Calu3 (cell line): ENCODE measurements at regions of chr6 and their contacts with region 1.

Region 1: GRCh38 chr6:52087498-52087999 is at the start of gene PKHD1:
- DNase-seq: peak; percentile 73
- H3K4me3 Mint-ChIP-seq: peak within 1 kb of the TSS; percentile 87
- H3K27ac Mint-ChIP-seq: peak within 1 kb of the TSS; percentile 92
- H3K4me1 Mint-ChIP-seq: peaks cover 43% of the 10 kb centered on the region
- H3K27me3 Mint-ChIP-seq: no peaks in the 10 kb centered on the region
- CTCF ChIP-seq: peak; percentile 53
- total RNA-seq, gene PKHD1: 23.7 and 25.2 TPM in 2 replicates

Region 2: DNA sequence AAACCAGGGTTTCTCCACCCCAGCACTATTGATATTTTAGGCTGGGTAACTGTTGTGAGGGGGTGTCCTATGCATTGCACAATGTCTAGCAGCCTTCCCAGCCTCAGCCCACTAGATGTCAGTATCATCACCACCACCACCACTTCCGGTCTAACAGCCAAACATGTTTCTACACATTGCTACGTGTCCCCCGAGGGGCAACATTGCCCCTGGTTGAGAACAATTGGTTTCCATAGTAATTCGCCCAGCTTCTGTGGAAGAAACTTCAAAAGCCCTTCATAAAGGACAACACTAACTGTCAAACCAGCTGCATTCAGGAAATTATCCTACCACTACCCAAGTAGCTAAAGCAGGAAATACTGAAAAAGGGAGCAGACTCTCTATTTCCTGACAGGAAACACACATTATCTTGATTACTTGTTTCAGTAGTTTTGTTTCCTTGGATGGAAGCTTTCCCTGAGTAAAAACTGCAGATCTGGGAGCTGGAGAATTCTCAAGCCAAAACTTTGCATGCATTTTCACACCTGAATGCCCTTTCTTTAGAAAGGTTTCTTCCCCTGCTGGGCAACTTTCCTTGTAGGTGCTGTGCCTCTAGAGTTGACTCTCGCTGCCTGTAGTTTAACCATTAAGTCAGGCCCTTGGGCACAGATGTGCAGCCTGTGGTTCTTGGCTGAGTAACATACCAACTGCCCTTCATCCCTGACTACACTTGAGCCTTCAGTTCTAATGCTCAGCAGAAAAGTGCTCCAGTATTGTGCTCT is 23.8 kb before region 1 on chr6:
- CTCF ChIA-PET with region 1: interaction called, 3 read pairs
- intact Hi-C with region 1: loop called (anchors 1 kb)
- DNase-seq: peak; percentile 48
- H3K4me3 Mint-ChIP-seq: no peak overlapping the region
- H3K27ac Mint-ChIP-seq: peak overlapping the region; percentile 56
- H3K4me1 Mint-ChIP-seq: peaks cover 25% of the 10 kb centered on the region
- H3K27me3 Mint-ChIP-seq: no peaks in the 10 kb centered on the region
- CTCF ChIP-seq: peak; percentile 10

Region 3: GRCh38 chr6:52077180-52077884 is 10.2 kb before region 1 on chr6:
- CTCF ChIA-PET with region 1: interaction called, 17 read pairs
- intact Hi-C with region 1: loop called (anchors 1 kb)
- DNase-seq: peak; percentile 72
- H3K4me3 Mint-ChIP-seq: peak overlapping the region; percentile 24
- H3K27ac Mint-ChIP-seq: peak overlapping the region; percentile 82
- H3K4me1 Mint-ChIP-seq: peaks cover 81% of the 10 kb centered on the region
- H3K27me3 Mint-ChIP-seq: no peaks in the 10 kb centered on the region
- CTCF ChIP-seq: no peak

Region 4: DNA sequence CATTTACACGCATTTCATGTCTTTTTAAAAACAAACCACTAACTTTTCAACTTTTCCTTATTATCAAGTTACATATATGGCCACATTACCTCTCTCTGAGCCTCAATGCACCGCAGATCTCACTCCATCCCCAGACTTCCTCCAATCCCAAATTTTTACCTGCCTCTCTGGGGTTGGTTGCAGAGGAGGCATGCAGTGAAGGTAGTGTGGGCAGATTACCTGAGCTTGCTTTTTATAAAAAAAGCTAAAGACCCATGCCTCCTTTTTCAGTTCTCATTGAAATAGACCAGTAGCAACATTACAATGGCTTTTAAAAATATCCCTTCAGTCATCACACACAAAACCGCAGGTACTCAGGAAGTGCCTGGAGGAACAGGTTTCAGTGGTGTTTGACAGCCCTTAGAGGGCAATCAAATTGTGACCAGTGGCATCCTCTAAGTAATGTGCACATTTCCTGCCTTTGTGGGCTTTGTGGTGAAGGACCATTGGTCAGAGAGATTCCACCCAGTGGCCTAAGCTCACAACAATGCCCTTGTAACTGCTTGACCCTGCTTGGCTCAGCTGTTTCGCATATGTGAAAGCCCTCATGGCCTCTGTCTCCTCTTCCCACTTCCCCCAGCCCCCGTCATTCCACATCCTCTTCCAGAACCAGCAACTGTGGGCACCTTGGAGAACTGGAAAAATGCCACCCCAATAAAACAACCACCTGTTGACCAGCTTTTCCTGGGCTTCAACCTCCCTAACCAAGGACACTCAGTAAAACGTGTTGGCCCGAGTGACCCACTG is 68.4 kb after region 1 on chr6:
- CTCF ChIA-PET with region 1: no interaction called
- intact Hi-C with region 1: loop called (anchors 5 kb)
- DNase-seq: peak; percentile 52
- H3K4me3 Mint-ChIP-seq: peak overlapping the region; percentile 53
- H3K27ac Mint-ChIP-seq: peak overlapping the region; percentile 94
- H3K4me1 Mint-ChIP-seq: peaks cover 48% of the 10 kb centered on the region
- H3K27me3 Mint-ChIP-seq: no peaks in the 10 kb centered on the region
- CTCF ChIP-seq: no peak

Region 5: GRCh38 chr6:52953911-52954839 is 866.6 kb after region 1 on chr6:
- CTCF ChIA-PET with region 1: no interaction called
- intact Hi-C with region 1: no loop called
- DNase-seq: no peak
- H3K4me3 Mint-ChIP-seq: no peak overlapping the region
- H3K27ac Mint-ChIP-seq: no peak overlapping the region
- H3K4me1 Mint-ChIP-seq: no peaks in the 10 kb centered on the region
- H3K27me3 Mint-ChIP-seq: peaks cover 16% of the 10 kb centered on the region
- CTCF ChIP-seq: no peak